Posterior vena cava (tissue), 2 donors: ENCODE measurements at regions of chr16 and their contacts with region 1.

Region 1: GRCh38 chr16:8572919-8573724 is 17.2 kb downstream of the TMEM114 start:
- DNase-seq: no peak

Region 2: GRCh38 chr16:8634991-8635736 is 62.0 kb after region 1 on chr16:
- intact Hi-C with region 1: loop called in 1 of 2 experiments (anchors 10 kb)
- DNase-seq: peak; percentile 57

Region 3: GRCh38 chr16:8708536-8708935 is 135.4 kb after region 1 on chr16:
- intact Hi-C with region 1: no loop called
- DNase-seq: no peak